HEK293 (cell line): ENCODE measurements at regions of chr6 and their contacts with region 1.

Region 1: GRCh38 chr6:7910654-7911344 is at the start of gene TXNDC5:
- H3K4me3 ChIP-seq: peak within 1 kb of the TSS; percentile 71
- H3K27ac ChIP-seq: peak within 1 kb of the TSS; percentile 82
- H3K4me1 ChIP-seq: peaks cover 8% of the 10 kb centered on the region; the same call in 1 of the 2 replicates
- CTCF ChIP-seq: no peak

Region 2: GRCh38 chr6:7899101-7899888 is 11.5 kb before region 1 on chr6:
- CTCF ChIA-PET with region 1: interaction called, 5 read pairs
- POLR2A ChIA-PET with region 1: interaction called, 10 read pairs
- H3K4me3 ChIP-seq: no peak overlapping the region
- H3K27ac ChIP-seq: no peak overlapping the region
- H3K4me1 ChIP-seq: no peaks in the 10 kb centered on the region
- CTCF ChIP-seq: peak; percentile 45; the same call in 1 of the 2 replicates